IMR-90 (cell line): ENCODE measurements at regions of chr9 and their contacts with region 1.

Region 1: GRCh38 chr9:113187935-113188595 is 33.0 kb downstream of the FKBP15 start:
- DNase-seq: peak; percentile 94
- ATAC-seq: peak; percentile 94
- H3K4me3 ChIP-seq: no peak overlapping the region
- H3K27ac ChIP-seq: peak overlapping the region; percentile 52
- H3K4me1 ChIP-seq: peaks cover 6% of the 10 kb centered on the region
- H3K27me3 ChIP-seq: no peaks in the 10 kb centered on the region
- CTCF ChIP-seq: no peak
- POLR2A ChIP-seq: no peak
- RAD21 ChIP-seq: no peak

Region 2: GRCh38 chr9:113261917-113262671 is 74.0 kb after region 1 on chr9:
- CTCF ChIA-PET with region 1: no interaction called
- POLR2A ChIA-PET with region 1: no interaction called
- dilution Hi-C with region 1: no loop called
- in situ Hi-C with region 1: no loop called
- intact Hi-C with region 1: loop called (anchors 10 kb)
- DNase-seq: no peak
- ATAC-seq: no peak
- H3K4me3 ChIP-seq: no peak overlapping the region
- H3K27ac ChIP-seq: no peak overlapping the region
- H3K4me1 ChIP-seq: no peaks in the 10 kb centered on the region
- H3K27me3 ChIP-seq: no peaks in the 10 kb centered on the region
- CTCF ChIP-seq: no peak
- POLR2A ChIP-seq: no peak
- RAD21 ChIP-seq: no peak